ENCODE measurements at regions of chr10 and their contacts with region 1.

Region 1: GRCh38 chr10:123043409-123043925 is 34.7 kb downstream of the ACADSB start:
- H3K4me3 ChIP-seq: no peak overlapping the region
- H3K27ac ChIP-seq: no peak overlapping the region
- H3K4me1 ChIP-seq: no peaks in the 10 kb centered on the region
- CTCF ChIP-seq: peak; percentile 87

Region 2: GRCh38 chr10:123057968-123058367 is 14.5 kb after region 1 on chr10:
- CTCF ChIA-PET with region 1: interaction called, 14 read pairs
- POLR2A ChIA-PET with region 1: no interaction called
- H3K4me3 ChIP-seq: no peak overlapping the region
- H3K27ac ChIP-seq: no peak overlapping the region
- H3K4me1 ChIP-seq: no peaks in the 10 kb centered on the region
- CTCF ChIP-seq: no peak

Region 3: DNA sequence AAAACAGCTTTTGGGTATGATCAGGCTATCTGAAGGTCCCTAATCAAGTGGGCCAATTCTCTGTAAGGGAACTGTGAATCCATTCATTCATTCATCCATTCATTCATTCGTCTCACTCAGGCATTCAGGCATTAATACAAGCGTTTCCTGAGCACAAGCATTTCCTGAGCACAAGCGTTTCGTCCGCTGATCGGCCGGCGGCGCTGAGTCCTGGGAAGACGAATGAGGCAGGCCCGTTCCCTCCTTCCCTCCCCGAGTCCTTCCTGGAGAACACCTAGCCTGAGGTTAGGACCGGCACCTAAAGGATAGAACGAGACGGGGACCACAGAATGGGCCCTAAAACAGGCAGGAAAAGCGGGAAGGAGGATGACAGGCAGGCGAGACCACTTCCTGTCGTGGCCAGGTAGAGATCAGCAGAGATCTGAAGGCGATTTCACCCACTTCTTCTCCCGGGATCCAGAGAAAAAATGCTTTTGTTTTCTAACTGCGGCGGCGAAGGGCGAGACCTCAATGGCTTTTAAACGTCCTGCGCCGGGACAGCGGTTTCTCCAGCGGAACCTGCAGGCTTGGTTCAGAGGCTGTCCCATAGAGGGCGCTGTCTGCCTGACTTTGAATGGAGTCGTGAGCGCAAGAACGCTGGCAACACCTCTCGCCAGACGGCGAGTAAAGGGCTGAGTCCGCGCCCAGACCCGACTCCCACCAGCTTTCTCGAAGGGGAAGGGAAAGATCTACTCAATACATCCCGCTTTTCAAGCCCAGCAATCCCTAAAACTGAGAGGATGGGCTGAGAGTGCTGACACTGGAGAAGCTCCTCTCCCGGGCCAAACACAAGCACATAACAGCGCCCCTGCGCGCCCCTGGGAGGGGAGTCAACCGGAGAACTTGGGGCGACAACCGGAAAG is 89.4 kb after region 1 on chr10:
- CTCF ChIA-PET with region 1: interaction called, 20 read pairs
- POLR2A ChIA-PET with region 1: no interaction called
- H3K4me3 ChIP-seq: peak overlapping the region; percentile 16; the same call in 1 of the 2 replicates
- H3K27ac ChIP-seq: no peak overlapping the region
- H3K4me1 ChIP-seq: no peaks in the 10 kb centered on the region
- CTCF ChIP-seq: peak; percentile 85

Region 4: GRCh38 chr10:123221418-123221817 is 178.0 kb after region 1 on chr10:
- CTCF ChIA-PET with region 1: no interaction called
- POLR2A ChIA-PET with region 1: no interaction called
- H3K4me3 ChIP-seq: no peak overlapping the region
- H3K27ac ChIP-seq: no peak overlapping the region
- H3K4me1 ChIP-seq: no peaks in the 10 kb centered on the region
- CTCF ChIP-seq: no peak

Region 5: DNA sequence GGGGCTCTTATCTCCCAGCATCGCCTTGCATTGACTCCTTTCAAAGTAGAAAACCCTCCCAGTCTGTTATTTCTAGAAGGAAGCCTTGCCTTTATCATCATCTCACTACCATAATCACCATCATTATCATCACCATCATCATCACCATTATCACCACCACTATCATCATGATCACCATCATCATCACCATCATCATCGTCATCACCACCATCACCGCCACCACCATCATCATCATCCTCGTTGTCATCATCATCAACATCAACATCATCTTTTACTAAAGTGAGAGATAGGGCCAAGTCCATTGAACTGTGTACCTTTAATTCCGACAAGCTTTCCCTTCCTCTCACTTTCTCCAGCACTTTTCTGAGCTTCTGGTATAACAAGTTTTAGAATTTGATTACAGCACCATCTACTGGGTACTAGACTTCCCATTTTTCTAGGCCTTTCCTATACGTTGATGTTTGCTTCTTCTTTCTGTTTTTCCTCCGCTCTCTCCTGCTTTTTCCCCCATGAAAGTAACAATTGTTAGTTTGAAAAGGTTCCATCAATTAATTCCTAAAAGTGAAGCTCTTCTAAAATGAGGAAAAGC is 337.1 kb after region 1 on chr10:
- CTCF ChIA-PET with region 1: interaction called, 16 read pairs
- POLR2A ChIA-PET with region 1: no interaction called
- H3K4me3 ChIP-seq: no peak overlapping the region
- H3K27ac ChIP-seq: no peak overlapping the region
- H3K4me1 ChIP-seq: no peaks in the 10 kb centered on the region
- CTCF ChIP-seq: peak; percentile 24

Region 6: DNA sequence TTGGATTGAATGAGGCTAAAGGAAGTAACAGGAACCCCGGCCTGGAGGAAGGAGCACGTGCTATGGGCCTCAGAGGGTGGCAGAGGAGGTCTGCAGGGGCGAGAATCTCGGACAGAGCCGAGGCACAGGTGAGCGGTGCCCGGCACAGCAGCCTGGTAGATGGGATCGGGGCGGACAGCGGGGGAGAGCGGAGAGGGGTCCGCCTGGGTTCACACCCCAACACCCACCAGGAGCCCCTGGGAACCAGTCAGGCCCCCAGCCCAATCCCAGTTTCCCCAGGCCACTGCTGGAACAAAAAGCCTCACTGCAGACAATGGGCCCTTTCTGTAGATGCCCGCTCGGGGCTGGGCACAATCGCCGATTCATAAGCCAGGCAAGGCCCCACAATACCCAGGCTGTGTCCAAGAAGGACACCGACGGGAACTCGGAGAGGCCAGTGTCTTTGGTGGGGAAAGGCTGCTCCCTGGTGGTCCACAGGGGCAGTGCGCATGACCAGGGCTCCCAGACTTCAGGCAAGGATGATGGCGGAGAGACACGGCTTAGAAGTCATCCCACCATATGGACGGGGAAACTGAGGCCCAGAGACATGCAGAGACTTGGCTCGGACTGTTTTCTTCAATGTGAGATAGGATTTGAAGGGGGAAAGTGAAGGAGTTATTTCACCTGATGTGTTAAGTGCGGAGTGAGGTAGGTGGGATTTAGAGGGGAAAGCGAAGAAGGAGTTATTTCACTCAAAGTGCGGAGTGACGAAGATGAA is 515.8 kb after region 1 on chr10:
- CTCF ChIA-PET with region 1: interaction called, 33 read pairs
- POLR2A ChIA-PET with region 1: no interaction called
- H3K4me3 ChIP-seq: no peak overlapping the region
- H3K27ac ChIP-seq: no peak overlapping the region
- H3K4me1 ChIP-seq: no peaks in the 10 kb centered on the region
- CTCF ChIP-seq: peak; percentile 89

Region 7: GRCh38 chr10:124830435-124830834 is 1787.0 kb after region 1 on chr10:
- CTCF ChIA-PET with region 1: no interaction called
- POLR2A ChIA-PET with region 1: no interaction called
- H3K4me3 ChIP-seq: no peak overlapping the region
- H3K27ac ChIP-seq: no peak overlapping the region
- H3K4me1 ChIP-seq: no peaks in the 10 kb centered on the region
- CTCF ChIP-seq: no peak